ENCODE measurements at regions of chr12 and their contacts with region 1.

Region 1: DNA sequence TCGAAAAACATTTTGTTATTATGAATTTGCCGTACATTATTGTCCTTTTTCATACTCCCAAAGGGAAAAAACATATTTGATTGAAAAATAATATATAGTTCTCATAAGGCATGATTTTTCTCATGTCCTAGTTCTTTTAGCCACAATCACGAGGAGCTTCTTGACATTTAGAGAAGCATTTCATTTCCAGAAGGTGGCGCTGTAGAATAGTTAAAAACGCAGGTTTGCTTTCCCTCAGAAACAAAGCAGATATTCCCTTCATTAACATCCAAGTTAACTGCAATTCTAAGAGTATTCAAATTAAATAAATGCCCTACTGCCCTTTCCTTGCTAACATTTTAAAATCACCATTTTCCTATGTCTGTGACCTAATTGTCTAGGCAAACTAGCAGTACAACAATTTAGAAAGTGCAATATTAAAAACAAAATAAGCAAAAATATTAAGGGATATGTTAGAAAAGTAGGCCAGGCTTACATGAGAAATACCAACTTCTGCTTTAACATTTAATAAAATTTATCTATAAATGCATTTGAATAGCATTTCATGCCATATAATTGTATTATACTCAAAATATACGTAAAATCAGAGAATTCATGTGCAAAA is 10.9 kb upstream of the PIK3C2G start:
- DNase-seq: peak; percentile 58
- H3K4me3 ChIP-seq: no peak overlapping the region
- H3K27ac ChIP-seq: no peak overlapping the region
- H3K4me1 ChIP-seq: peaks cover 4% of the 10 kb centered on the region
- H3K27me3 ChIP-seq: no peaks in the 10 kb centered on the region
- CTCF ChIP-seq: peak; percentile 70 to 72

Region 2: DNA sequence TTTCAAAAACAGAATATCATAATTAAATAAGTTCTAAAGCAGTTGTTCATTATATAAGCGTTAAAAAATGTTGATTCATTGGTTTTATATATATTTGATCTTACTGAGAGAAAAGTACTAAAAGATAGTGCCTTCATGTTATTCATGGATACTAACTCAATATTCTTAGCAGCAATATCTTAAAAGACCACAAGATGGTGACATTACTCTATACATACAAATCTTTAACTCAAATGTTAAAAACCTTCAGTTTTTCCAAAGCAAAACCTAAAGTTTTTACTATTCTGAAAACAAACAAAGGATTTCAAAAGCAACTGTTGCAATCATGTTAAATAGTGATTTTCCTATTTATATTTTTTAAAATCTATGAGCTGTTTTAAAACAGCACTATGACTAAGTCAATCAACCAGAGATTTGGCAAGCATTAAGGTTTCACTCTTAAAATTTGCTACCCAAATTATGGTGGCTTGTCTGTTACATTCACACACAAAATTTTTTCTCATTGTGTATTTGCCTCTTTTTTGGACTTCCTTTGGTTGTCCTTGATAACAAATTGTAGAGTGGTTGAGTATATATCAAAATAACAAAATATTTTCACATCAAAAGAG is 110.3 kb before region 1 on chr12:
- CTCF ChIA-PET with region 1: no interaction called
- dilution Hi-C with region 1: no loop called
- in situ Hi-C with region 1: no loop called
- intact Hi-C with region 1: no loop called
- DNase-seq: peak; percentile 9
- H3K4me3 ChIP-seq: no peak overlapping the region
- H3K27ac ChIP-seq: no peak overlapping the region
- H3K4me1 ChIP-seq: peaks cover 12% of the 10 kb centered on the region
- H3K27me3 ChIP-seq: no peaks in the 10 kb centered on the region
- CTCF ChIP-seq: peak; percentile 55 to 59

Region 3: DNA sequence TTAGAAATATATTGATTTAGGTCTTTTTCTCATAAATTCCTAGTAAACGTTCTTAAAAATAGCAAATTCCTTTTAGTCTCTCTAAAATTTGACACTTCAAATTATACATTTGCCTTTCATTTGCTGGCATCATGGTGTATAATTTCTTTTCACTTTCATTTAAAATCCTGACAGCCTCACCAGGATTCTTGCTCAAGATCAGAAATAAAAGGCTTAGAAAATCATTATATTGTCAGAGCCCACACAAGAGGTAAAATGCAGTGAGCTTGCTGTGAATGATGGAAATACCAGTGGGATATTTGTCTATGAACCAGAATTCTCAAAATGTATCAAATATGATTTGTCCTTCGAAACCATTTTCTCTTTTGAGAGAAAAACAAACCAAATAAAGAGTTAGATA is 67.3 kb before region 1 on chr12:
- CTCF ChIA-PET with region 1: no interaction called
- dilution Hi-C with region 1: no loop called
- in situ Hi-C with region 1: no loop called
- intact Hi-C with region 1: no loop called
- DNase-seq: no peak
- H3K4me3 ChIP-seq: no peak overlapping the region
- H3K27ac ChIP-seq: no peak overlapping the region
- H3K4me1 ChIP-seq: no peaks in the 10 kb centered on the region
- H3K27me3 ChIP-seq: peaks cover 2% of the 10 kb centered on the region
- CTCF ChIP-seq: no peak

Region 4: DNA sequence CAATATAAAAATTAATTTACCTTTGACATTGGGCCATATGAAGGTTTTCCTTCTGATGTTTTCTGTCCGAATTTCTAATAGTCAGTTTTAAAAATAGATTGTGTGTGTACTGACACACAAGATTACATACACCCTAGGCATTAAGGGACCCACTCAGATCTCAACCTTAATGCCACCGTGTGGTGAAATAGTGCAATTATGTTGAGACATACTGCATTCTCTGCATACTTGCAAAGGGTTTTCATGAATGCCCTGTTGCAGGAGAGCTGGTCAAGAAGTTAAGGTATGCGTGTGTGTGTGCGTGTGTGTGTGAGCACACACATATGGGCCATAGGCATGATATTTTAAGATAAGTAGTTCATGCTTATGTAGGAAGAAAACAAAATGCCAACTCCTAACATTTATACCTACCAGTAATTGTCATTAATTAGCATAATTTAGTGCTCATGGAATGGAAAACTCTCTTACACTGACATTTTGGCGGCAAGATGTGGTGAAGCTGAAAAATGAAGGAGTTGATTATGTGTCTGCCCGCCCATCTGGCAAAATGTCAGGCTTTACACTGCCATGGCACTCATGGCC is 69.7 kb after region 1 on chr12:
- CTCF ChIA-PET with region 1: interaction called, 6 read pairs
- dilution Hi-C with region 1: no loop called
- in situ Hi-C with region 1: loop called in 1 of 2 experiments (anchors 5 kb)
- intact Hi-C with region 1: loop called (anchors 1 kb)
- DNase-seq: peak; percentile 78
- H3K4me3 ChIP-seq: no peak overlapping the region
- H3K27ac ChIP-seq: peak overlapping the region; percentile 11
- H3K4me1 ChIP-seq: peaks cover 8% of the 10 kb centered on the region
- H3K27me3 ChIP-seq: no peaks in the 10 kb centered on the region
- CTCF ChIP-seq: peak; percentile 63 to 74

Measured in mammary epithelial cell (primary cell).